AG04450 (cell line): ENCODE measurements at regions of chr1 and their contacts with region 1.

Region 1: DNA sequence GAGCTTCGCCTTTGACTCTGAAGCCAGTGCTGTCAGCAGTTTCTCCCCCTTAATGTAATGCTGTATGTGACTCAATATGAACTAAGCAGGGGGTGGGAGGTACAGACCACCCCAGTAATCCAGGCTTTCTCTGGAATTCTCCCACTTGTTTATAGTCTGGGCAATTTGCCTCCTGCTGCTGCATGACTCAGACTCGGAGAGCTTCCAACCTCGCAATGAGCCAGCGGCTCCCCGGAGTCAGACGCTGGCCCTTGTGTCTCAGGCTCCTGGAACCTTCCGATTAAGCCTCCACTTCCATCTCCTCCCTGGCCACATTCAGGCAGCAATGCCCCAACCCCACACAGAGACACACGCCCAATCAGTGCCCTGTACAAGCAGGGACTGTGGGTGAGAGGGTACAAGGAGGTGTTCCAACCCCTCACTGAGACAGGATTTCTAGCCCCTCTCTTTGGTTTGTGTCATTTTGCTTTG is 471.7 kb upstream of the VAMP3 start:
- DNase-seq: peak; percentile 98
- H3K4me3 ChIP-seq: peak overlapping the region; percentile 48
- H3K27ac ChIP-seq: peak overlapping the region; percentile 100
- H3K27me3 ChIP-seq: no peaks in the 10 kb centered on the region
- CTCF ChIP-seq: no peak

Region 2: DNA sequence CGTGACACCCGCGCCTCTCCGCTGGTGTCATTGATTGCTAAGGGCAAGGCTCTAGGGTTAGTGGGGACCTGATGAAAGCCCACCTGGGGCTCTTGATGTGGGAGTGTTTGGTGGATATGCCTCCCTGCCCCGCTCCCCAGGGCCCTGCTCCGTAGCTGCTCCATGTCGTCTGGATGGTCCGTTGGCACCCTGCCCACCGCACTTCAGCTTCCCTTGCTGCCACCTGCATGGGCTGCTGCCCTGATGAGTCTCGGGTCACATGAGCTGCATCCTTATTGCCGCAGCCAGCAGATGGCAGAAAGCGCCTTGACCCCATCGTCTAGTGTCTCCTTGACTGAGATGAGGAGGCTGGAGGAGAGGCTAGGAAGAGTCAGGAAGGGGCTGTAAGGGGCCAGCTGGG is 74.7 kb before region 1 on chr1:
- CTCF ChIA-PET with region 1: no interaction called
- POLR2A ChIA-PET with region 1: interaction called, 16 read pairs
- DNase-seq: no peak
- H3K4me3 ChIP-seq: no peak overlapping the region
- H3K27ac ChIP-seq: no peak overlapping the region
- H3K27me3 ChIP-seq: no peaks in the 10 kb centered on the region
- CTCF ChIP-seq: no peak

Region 3: GRCh38 chr1:7261490-7261889 is 37.9 kb before region 1 on chr1:
- CTCF ChIA-PET with region 1: no interaction called
- POLR2A ChIA-PET with region 1: no interaction called
- DNase-seq: no peak
- H3K4me3 ChIP-seq: no peak overlapping the region
- H3K27ac ChIP-seq: no peak overlapping the region
- H3K27me3 ChIP-seq: no peaks in the 10 kb centered on the region
- CTCF ChIP-seq: no peak

Region 4: GRCh38 chr1:7281821-7282220 is 17.5 kb before region 1 on chr1:
- CTCF ChIA-PET with region 1: interaction called, 3 read pairs
- POLR2A ChIA-PET with region 1: interaction called, 15 read pairs
- DNase-seq: peak; percentile 75
- H3K4me3 ChIP-seq: no peak overlapping the region
- H3K27ac ChIP-seq: no peak overlapping the region
- H3K27me3 ChIP-seq: no peaks in the 10 kb centered on the region
- CTCF ChIP-seq: no peak